Activated naive CD4-positive, alpha-beta T cell treated with anti-CD3 and anti-CD28 coated beads for 36 hours (primary cell): ENCODE measurements at regions of chr2 and their contacts with region 1.

Region 1: GRCh38 chr2:224576088-224576715 is 9.0 kb downstream of the CUL3 start:
- DNase-seq: no peak
- H3K4me3 Mint-ChIP-seq: no peak overlapping the region
- H3K27ac Mint-ChIP-seq: no peak overlapping the region
- H3K4me1 Mint-ChIP-seq: peaks cover 89% of the 10 kb centered on the region
- H3K27me3 Mint-ChIP-seq: no peaks in the 10 kb centered on the region

Region 2: GRCh38 chr2:224561234-224562005 is 14.8 kb before region 1 on chr2:
- CTCF ChIA-PET with region 1: interaction called, 16 read pairs
- intact Hi-C with region 1: loop called (anchors 2 kb)
- DNase-seq: no peak
- H3K4me3 Mint-ChIP-seq: no peak overlapping the region
- H3K27ac Mint-ChIP-seq: no peak overlapping the region
- H3K4me1 Mint-ChIP-seq: peaks cover 37% of the 10 kb centered on the region
- H3K27me3 Mint-ChIP-seq: no peaks in the 10 kb centered on the region

Region 3: DNA sequence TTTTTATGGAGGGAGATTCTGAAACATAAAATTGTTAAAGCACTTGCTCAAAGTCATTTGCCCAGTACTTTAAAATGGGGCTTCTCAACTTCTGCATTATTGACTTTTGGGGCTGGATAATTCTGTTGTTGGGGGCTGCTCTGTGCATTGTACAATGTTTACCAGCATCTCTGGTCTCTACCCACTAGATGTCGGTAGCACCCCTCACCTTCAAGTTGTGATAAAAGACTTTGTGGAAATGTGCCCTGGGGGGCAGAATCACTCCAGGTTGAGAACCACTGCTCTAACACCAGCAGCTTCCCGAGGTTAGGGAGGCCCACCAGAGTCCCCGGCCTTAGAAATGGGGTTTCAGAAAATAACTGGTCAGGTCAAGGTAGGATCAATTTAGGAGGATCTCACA is 35.7 kb after region 1 on chr2:
- CTCF ChIA-PET with region 1: no interaction called
- intact Hi-C with region 1: no loop called
- DNase-seq: no peak
- H3K4me3 Mint-ChIP-seq: no peak overlapping the region
- H3K27ac Mint-ChIP-seq: no peak overlapping the region
- H3K4me1 Mint-ChIP-seq: no peaks in the 10 kb centered on the region
- H3K27me3 Mint-ChIP-seq: no peaks in the 10 kb centered on the region